Thyroid gland (tissue), 4 donors: ENCODE measurements at regions of chr1 and their contacts with region 1.

Region 1: GRCh38 chr1:100921109-100921706 is 25.3 kb downstream of the SLC30A7 start:
- DNase-seq: no peak
- H3K4me3 ChIP-seq: no peak overlapping the region
- H3K27ac ChIP-seq: no peak overlapping the region
- H3K4me1 ChIP-seq: no peaks in the 10 kb centered on the region
- H3K27me3 ChIP-seq: no peaks in the 10 kb centered on the region
- CTCF ChIP-seq: peak; percentile 37 to 71 (median 67)
- POLR2A ChIP-seq: no peak

Region 2: DNA sequence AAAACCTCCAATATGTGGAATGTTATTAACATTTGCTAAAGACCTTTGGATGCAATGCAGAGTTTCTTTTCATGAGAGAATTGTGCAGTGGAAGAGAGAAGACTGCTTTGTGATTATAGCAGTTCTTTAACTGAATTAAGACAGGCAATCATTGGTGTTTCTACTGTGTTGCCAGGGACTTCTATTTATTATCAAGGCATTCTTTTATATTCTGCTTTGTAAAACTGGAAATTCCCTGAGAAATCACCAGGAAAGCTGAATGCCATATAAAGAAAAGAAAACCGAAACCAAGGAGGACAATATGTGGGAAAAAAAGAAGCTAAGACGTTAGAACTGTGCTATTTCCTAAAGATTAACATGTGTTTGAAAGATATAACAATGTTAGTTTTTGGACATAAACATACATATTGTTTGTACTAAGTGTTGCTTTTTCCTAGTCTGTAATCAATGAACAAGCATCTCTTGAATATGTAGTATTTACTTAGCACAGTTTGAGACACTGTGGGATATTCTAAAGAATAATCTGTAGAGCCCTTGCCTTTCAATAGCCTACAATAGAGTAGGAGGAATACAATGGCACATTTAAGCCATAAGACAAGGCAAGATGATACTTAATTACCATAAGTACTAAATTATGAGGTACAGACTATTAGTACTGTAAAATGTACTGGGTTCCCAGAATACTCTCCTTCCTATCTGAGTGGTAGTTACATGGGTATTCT is 73.7 kb before region 1 on chr1:
- intact Hi-C with region 1: no loop called
- DNase-seq: no peak
- H3K4me3 ChIP-seq: no peak overlapping the region
- H3K27ac ChIP-seq: no peak overlapping the region
- H3K4me1 ChIP-seq: no peaks in the 10 kb centered on the region
- H3K27me3 ChIP-seq: no peaks in the 10 kb centered on the region
- CTCF ChIP-seq: no peak
- POLR2A ChIP-seq: no peak

Region 3: GRCh38 chr1:100979631-100980030 is 58.4 kb after region 1 on chr1:
- intact Hi-C with region 1: no loop called
- DNase-seq: no peak
- H3K4me3 ChIP-seq: no peak overlapping the region
- H3K27ac ChIP-seq: no peak overlapping the region
- H3K4me1 ChIP-seq: peaks cover 10 to 20% of the 10 kb centered on the region in 2 donors
- H3K27me3 ChIP-seq: no peaks in the 10 kb centered on the region
- CTCF ChIP-seq: no peak
- POLR2A ChIP-seq: no peak

Region 4: GRCh38 chr1:101238681-101239094 is 317.5 kb after region 1 on chr1:
- intact Hi-C with region 1: loop called (anchors 5 kb)
- DNase-seq: peak; percentile 78 to 86
- H3K4me3 ChIP-seq: no peak overlapping the region
- H3K27ac ChIP-seq: peak overlapping the region; percentile 51 to 87 (median 70)
- H3K4me1 ChIP-seq: peaks cover 7 to 13% of the 10 kb centered on the region in 2 donors
- H3K27me3 ChIP-seq: no peaks in the 10 kb centered on the region
- CTCF ChIP-seq: peak; percentile 76 to 97 (median 84)
- POLR2A ChIP-seq: no peak

Region 5: GRCh38 chr1:101288491-101288944 is 367.3 kb after region 1 on chr1:
- intact Hi-C with region 1: loop called (anchors 10 kb)
- DNase-seq: peak; percentile 52 to 59
- H3K4me3 ChIP-seq: no peak overlapping the region
- H3K27ac ChIP-seq: no peak overlapping the region
- H3K4me1 ChIP-seq: no peaks in the 10 kb centered on the region
- H3K27me3 ChIP-seq: no peaks in the 10 kb centered on the region
- CTCF ChIP-seq: peak in 5 of 6 experiments; percentile 73 to 97 (median 81)
- POLR2A ChIP-seq: no peak